Activated CD8-positive, alpha-beta T cell treated with anti-CD3 and anti-CD28 coated beads for 36 hours (primary cell): ENCODE measurements at regions of chr14 and their contacts with region 1.

Region 1: DNA sequence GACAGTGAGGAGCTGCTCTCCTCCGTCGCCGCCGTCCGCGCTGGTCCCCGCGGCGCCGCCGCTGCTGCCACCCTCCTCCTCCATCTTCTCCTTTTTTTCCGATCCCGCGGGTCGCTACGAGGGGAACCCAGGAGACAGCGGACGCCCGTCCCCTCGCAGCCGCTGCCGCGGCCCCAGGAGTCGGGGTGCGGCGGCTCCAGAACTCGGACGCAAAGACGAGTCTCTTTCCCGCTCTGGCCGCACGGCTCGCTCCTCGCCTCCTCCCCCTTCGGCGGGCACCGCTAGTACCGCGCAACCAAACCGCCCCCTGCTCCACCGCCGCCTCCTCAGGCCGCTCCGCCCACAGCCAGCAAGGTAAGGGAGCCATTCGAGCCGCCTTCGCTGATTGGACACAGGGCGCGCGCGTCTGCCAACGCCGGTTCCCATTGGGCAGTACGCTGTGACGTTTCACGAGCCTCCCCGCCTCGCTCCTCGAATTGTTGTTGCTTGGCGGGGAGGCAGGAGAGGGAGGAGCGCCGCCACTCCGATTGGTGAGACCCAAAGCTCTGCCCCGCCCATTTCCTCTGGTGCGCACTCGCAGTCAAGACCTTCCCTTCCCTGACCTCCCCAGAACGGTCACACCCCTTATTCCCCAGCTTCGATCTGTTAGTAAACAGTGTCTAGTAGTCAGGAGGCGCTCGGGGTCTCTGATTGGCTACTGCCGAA is at the start of gene RPS6KA5:
- DNase-seq: peak; percentile 100
- ATAC-seq: peak; percentile 86
- H3K4me3 Mint-ChIP-seq: peak within 1 kb of the TSS; percentile 77
- H3K27ac Mint-ChIP-seq: peak within 1 kb of the TSS; percentile 58
- H3K4me1 Mint-ChIP-seq: peaks cover 53% of the 10 kb centered on the region
- H3K27me3 Mint-ChIP-seq: no peaks in the 10 kb centered on the region
- CTCF ChIP-seq: no peak
- total RNA-seq, gene RPS6KA5: 12.8 to 12.9 TPM

Region 2: DNA sequence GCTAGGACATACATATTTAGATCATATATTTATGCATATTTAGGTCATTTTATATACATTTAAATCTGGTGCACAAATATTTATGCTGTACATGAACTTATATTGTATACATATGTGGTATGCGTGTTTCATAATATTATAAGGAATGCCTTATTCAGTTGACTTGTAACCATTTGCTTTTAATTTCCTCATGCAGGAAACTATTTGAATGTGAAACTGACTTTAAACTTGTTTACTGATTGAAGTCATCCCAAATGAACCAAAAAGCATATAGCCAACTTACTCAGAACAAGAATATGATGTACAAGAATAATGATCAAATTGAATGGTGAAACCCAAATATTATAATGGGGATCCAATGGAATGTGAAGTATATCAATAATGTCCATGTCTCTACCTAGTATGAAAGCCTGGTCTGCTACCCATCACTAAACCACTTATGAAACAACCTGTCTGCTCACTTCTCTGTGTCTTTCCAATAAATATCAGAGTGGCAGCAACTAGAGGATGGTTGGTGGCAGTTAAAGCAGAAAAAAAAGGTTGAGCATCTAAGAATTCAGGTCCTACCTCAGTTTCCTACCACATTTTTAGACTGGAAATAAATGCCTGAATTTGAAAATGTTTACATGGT is 38.4 kb before region 1 on chr14:
- CTCF ChIA-PET with region 1: no interaction called
- POLR2A ChIA-PET with region 1: interaction called, 3 read pairs
- intact Hi-C with region 1: loop called (anchors 5 kb)
- DNase-seq: no peak
- ATAC-seq: peak; percentile 68
- H3K4me3 Mint-ChIP-seq: peak overlapping the region; percentile 66
- H3K27ac Mint-ChIP-seq: peak overlapping the region; percentile 86
- H3K4me1 Mint-ChIP-seq: peaks cover 54% of the 10 kb centered on the region
- H3K27me3 Mint-ChIP-seq: no peaks in the 10 kb centered on the region
- CTCF ChIP-seq: no peak

Region 3: DNA sequence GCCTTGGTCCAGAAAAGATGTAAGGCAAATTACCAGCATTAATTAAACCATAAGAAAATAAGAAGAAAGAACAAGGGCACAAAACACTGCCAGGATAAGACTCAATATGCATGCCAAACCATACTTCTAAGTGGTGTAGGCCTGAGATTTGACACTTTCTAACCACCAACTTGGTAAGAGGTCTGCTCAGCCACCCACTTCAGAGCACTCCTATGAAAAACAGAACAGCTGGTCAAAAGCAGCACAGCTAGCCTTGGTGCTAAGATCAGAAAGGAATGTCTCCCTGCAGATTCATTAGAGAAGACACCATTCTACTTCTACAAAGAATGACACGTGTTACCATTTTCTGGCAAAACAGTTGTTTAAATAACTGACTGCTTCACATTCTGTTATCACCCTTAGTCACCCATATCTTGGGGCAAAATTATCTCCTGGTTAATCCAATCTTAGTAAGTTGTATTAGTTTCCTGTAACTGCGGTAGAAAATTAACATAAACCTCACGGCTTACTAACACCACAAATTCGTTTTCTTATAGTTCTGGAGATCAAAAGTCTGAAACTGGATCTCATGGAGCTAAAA is 13.2 kb before region 1 on chr14:
- CTCF ChIA-PET with region 1: interaction called, 17 read pairs
- POLR2A ChIA-PET with region 1: interaction called, 10 read pairs
- intact Hi-C with region 1: no loop called
- DNase-seq: no peak
- ATAC-seq: peak; percentile 75
- H3K4me3 Mint-ChIP-seq: no peak overlapping the region
- H3K27ac Mint-ChIP-seq: no peak overlapping the region
- H3K4me1 Mint-ChIP-seq: peaks cover 41% of the 10 kb centered on the region
- H3K27me3 Mint-ChIP-seq: no peaks in the 10 kb centered on the region
- CTCF ChIP-seq: no peak